ENCODE measurements at regions of chr11 and their contacts with region 1.

Region 1: DNA sequence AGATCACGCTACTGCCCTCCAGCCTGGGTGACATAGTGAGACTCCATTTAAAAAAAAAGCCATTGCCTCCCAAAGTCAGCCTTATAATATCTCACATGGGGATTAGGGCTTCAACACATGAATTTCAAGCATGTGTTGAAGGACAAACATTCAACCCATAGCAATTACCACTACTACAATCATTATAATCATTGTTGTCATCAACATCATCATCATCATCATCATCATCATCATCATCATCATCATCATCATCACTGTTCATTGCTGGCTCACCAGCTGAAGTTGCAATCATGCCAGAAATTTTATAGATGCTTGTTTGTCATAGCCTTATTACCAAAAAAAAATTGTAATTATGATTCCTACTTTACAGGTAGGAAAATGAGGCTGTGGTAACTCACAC is 762.9 kb downstream of the METTL15 start:
- DNase-seq: no peak
- H3K4me3 ChIP-seq: no peak overlapping the region
- H3K27ac ChIP-seq: no peak overlapping the region
- H3K4me1 ChIP-seq: no peaks in the 10 kb centered on the region
- H3K27me3 ChIP-seq: no peaks in the 10 kb centered on the region
- CTCF ChIP-seq: no peak

Region 2: GRCh38 chr11:28571371-28571770 is 299.7 kb before region 1 on chr11:
- CTCF ChIA-PET with region 1: no interaction called
- POLR2A ChIA-PET with region 1: interaction called, 35 read pairs
- intact Hi-C with region 1: no loop called
- DNase-seq: no peak
- H3K4me3 ChIP-seq: no peak overlapping the region
- H3K27ac ChIP-seq: no peak overlapping the region
- H3K4me1 ChIP-seq: no peaks in the 10 kb centered on the region
- H3K27me3 ChIP-seq: no peaks in the 10 kb centered on the region
- CTCF ChIP-seq: no peak

Region 3: GRCh38 chr11:28632338-28632737 is 238.8 kb before region 1 on chr11:
- CTCF ChIA-PET with region 1: no interaction called
- POLR2A ChIA-PET with region 1: no interaction called
- intact Hi-C with region 1: no loop called
- DNase-seq: no peak
- H3K4me3 ChIP-seq: no peak overlapping the region
- H3K27ac ChIP-seq: no peak overlapping the region
- H3K4me1 ChIP-seq: 0 out of 2 replicates have a peak, but pooled peaks cover 11% of the 10 kb centered on the region
- H3K27me3 ChIP-seq: no peaks in the 10 kb centered on the region
- CTCF ChIP-seq: no peak

Region 4: DNA sequence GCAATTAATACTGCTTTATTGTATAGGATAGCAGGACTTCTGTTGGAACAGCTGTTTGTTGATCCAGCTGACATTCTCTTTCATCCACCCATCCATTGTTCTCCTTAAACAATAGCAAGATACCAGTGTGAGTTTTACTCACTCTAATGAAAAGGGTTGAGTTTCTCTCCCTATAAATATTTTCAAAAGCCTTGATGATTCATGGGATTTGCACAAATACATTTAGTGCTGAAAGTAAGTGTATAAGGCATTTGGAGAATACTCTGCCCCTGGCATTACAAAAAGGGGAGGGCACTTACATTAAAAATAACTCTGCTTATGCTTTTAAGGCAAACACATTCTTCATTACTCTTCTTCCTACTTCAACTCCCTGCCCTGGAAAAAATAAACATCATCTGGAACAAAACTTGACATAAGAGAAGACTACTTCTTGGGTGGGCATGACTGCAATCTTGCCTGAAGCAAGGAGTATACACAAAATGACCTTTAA is 128.0 kb before region 1 on chr11:
- CTCF ChIA-PET with region 1: no interaction called
- POLR2A ChIA-PET with region 1: no interaction called
- intact Hi-C with region 1: no loop called
- DNase-seq: no peak
- H3K4me3 ChIP-seq: no peak overlapping the region
- H3K27ac ChIP-seq: no peak overlapping the region
- H3K4me1 ChIP-seq: peaks cover 9% of the 10 kb centered on the region
- H3K27me3 ChIP-seq: no peaks in the 10 kb centered on the region
- CTCF ChIP-seq: no peak

Region 5: GRCh38 chr11:29019960-29020683 is 149.0 kb after region 1 on chr11:
- CTCF ChIA-PET with region 1: no interaction called
- POLR2A ChIA-PET with region 1: no interaction called
- intact Hi-C with region 1: no loop called
- DNase-seq: peak in 1 of 2 experiments; percentile 26
- H3K4me3 ChIP-seq: no peak overlapping the region
- H3K27ac ChIP-seq: no peak overlapping the region
- H3K4me1 ChIP-seq: peaks cover 6% of the 10 kb centered on the region; the same call in 1 of the 2 replicates
- H3K27me3 ChIP-seq: no peaks in the 10 kb centered on the region
- CTCF ChIP-seq: peak; percentile 31; the same call in 1 of the 2 replicates

Measured in PC-9 (cell line).